ENCODE measurements at regions of chr11 and their contacts with region 1.

Region 1: DNA sequence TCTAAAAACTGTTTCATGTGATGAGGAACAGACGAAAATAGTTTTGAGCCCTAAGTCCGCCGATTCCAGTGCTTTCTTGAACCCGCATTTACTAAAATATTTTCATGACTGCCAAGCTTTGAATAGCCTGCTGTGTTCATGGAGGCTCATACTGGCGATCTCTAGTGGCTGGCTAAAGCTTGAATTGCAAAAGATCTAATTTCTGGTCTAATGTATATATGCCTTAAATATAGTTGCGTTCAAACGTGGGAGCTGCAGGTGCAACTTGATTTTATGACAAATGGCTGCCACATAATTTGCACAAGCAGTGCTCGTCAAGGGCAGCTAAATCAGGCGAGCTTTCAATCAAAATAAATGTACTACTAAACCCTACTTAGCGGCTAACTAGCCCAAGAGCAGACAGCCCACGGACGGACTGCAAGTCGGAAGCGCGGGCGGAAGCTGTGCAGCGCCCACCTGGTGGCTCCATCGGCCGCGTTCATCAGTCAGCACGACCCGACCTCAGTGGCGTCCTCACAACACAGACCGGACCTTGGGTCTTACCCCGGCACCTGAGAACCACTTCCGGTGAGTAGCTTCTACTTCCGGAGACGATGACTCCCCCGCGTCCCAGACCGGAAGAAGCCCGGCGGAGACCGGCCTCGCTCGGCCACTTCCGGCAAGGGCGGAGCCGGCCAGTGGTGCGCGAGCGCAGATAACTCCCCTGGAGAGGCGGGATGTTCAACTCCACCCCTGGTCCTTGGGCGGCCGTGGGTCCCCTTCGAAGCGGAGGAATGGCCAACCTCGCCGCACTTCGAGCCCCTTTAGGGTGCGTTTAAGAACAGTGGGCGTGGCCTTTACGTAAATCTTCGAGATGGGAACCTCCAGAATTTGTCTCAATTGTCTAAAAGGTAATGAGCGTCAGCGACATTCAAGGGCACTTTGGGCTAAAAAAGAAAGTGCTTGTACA is 6.1 kb downstream of the RPL27A start:
- H3K4me3 Mint-ChIP-seq: peak overlapping the region; percentile 93
- H3K27ac Mint-ChIP-seq: peak overlapping the region; percentile 87
- H3K4me1 Mint-ChIP-seq: peaks cover 39% of the 10 kb centered on the region
- H3K27me3 Mint-ChIP-seq: no peaks in the 10 kb centered on the region

Region 2: GRCh38 chr11:8503910-8504364 is 184.8 kb before region 1 on chr11:
- intact Hi-C with region 1: no loop called
- H3K4me3 Mint-ChIP-seq: no peak overlapping the region
- H3K27ac Mint-ChIP-seq: no peak overlapping the region
- H3K4me1 Mint-ChIP-seq: no peaks in the 10 kb centered on the region
- H3K27me3 Mint-ChIP-seq: no peaks in the 10 kb centered on the region

Region 3: DNA sequence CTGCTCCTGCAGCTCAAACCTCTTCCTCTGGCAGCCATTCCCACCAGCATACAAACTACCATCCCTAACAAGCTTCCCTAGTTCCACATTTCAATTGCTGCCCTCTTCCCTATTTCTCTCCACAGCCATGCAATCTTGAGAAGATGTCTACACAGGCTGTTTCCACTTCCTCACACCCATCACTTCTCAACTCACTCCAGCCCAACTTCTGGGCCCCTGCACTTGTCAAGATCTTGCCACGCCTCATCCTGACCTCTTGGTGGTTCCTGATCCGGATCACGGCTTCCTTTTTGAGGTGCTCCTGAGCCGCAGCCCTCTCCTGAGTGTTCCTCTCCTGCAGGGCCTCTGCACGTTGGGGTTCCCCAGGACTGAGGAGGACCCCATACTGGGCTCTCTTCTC is 16.5 kb after region 1 on chr11:
- intact Hi-C with region 1: loop called (anchors 2 kb)
- H3K4me3 Mint-ChIP-seq: peak overlapping the region; percentile 10
- H3K27ac Mint-ChIP-seq: peak overlapping the region; percentile 79
- H3K4me1 Mint-ChIP-seq: peaks cover 44% of the 10 kb centered on the region
- H3K27me3 Mint-ChIP-seq: peaks cover 7% of the 10 kb centered on the region

Region 4: GRCh38 chr11:8813658-8814057 is 125.0 kb after region 1 on chr11:
- intact Hi-C with region 1: loop called (anchors 2 kb)
- H3K4me3 Mint-ChIP-seq: no peak overlapping the region
- H3K27ac Mint-ChIP-seq: no peak overlapping the region
- H3K4me1 Mint-ChIP-seq: peaks cover 8% of the 10 kb centered on the region
- H3K27me3 Mint-ChIP-seq: peaks cover 14% of the 10 kb centered on the region

Region 5: DNA sequence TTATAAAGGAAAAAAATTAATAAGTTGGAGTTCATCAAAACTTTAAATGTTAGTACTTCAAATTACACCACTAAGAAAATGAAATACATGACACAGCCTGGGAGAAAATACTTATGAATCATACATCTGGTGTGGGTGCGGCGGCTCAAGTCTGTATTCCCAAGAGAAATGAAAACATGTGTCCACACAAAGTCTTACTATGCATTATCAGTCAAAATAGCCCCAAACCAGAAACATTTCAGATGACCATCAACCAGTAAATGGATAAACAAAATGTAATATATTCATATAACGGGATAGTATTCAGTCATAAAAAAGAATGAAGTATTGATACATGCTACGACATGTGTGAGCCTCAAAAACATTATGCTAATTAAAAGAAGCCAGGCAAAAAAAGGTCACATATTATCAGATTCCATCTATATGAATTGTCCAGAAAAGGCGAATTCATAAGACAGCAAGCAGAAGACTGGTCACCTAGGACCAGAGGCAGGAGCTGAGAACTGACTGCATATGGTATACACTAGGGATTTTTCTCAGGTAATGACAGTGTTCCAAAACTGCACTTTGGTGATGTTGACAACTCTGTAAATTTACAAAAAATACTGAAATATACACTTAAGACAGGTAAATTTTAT is 217.0 kb after region 1 on chr11:
- intact Hi-C with region 1: no loop called
- H3K4me3 Mint-ChIP-seq: no peak overlapping the region
- H3K27ac Mint-ChIP-seq: no peak overlapping the region
- H3K4me1 Mint-ChIP-seq: peaks cover 27% of the 10 kb centered on the region
- H3K27me3 Mint-ChIP-seq: peaks cover 13% of the 10 kb centered on the region

Measured in dendritic cell treated with granulocyte-macrophage colony-stimulating factor and Interleukin-4, amounts not matched to agents 40 ng/mL and 50 ng/mL, for 4 days (primary cell).